Activated T-helper 2 cell treated with anti-CD3 and anti-CD28 coated beads, Interferon-gamma antibody, Interleukin-2, Interleukin-4, amounts not matched to agents 10 μg/mL and 5 μg/mL and 100 μg/mL, durations not matched to agents 14 hours and 24 hours and 36 hours (primary cell): ENCODE measurements at regions of chr7 and their contacts with region 1.

Region 1: DNA sequence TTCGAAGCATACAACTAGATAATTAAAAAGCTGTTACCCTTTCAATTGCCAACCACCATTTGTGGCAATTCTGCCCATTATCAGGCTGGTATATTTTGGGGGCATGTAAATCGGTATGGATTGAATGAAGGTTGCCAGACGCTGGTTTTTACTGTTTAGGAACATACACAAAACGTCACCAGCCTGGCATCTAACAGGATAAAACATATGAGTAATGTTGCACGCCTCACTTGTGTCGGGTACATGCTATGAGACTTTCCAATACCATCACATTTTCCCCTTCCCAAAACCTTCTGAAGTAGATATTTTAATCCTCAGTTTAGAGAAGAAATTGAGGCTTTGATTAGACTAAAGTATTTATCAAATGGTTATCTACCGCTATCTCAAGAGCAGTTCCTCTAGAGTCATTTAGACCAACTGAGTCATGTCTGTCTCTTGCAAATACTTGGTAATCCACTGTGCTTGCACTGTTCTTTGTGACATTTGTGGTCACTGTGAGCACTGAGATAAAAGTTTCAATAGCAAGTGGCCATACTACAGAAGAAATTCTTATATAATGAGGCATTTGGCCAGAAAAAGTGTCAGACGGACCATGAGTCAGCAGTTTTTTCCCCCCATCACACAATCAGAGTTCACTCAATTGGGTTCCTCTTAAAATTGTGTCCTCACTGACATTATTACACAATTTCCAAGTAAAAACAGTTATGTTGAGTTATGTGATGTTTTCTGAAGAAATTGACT is 498.7 kb downstream of the NXPH1 start:
- DNase-seq: no peak
- H3K4me3 Mint-ChIP-seq: no peak overlapping the region
- H3K27ac Mint-ChIP-seq: no peak overlapping the region
- H3K4me1 Mint-ChIP-seq: no peaks in the 10 kb centered on the region
- H3K27me3 Mint-ChIP-seq: no peaks in the 10 kb centered on the region

Region 2: GRCh38 chr7:8615019-8615418 is 317.1 kb before region 1 on chr7:
- intact Hi-C with region 1: no loop called
- DNase-seq: no peak
- H3K4me3 Mint-ChIP-seq: no peak overlapping the region
- H3K27ac Mint-ChIP-seq: no peak overlapping the region
- H3K4me1 Mint-ChIP-seq: no peaks in the 10 kb centered on the region
- H3K27me3 Mint-ChIP-seq: no peaks in the 10 kb centered on the region

Region 3: GRCh38 chr7:8985255-8985654 is 53.2 kb after region 1 on chr7:
- intact Hi-C with region 1: loop called (anchors 2 kb)
- DNase-seq: no peak
- H3K4me3 Mint-ChIP-seq: no peak overlapping the region
- H3K27ac Mint-ChIP-seq: no peak overlapping the region
- H3K4me1 Mint-ChIP-seq: no peaks in the 10 kb centered on the region
- H3K27me3 Mint-ChIP-seq: no peaks in the 10 kb centered on the region

Region 4: GRCh38 chr7:9219675-9220074 is 287.6 kb after region 1 on chr7:
- intact Hi-C with region 1: no loop called
- DNase-seq: no peak
- H3K4me3 Mint-ChIP-seq: no peak overlapping the region
- H3K27ac Mint-ChIP-seq: no peak overlapping the region
- H3K4me1 Mint-ChIP-seq: no peaks in the 10 kb centered on the region
- H3K27me3 Mint-ChIP-seq: no peaks in the 10 kb centered on the region